Activated CD8-positive, alpha-beta T cell treated with anti-CD3 and anti-CD28 coated beads, Interleukin-2, amount 10 ng/mL, durations not matched to agents 7 days and 5 days (primary cell): ENCODE measurements at regions of chr6 and their contacts with region 1.

Region 1: GRCh38 chr6:3023663-3024483 is 24.2 kb downstream of the NQO2 start:
- DNase-seq: peak; percentile 92
- ATAC-seq: peak; percentile 86
- H3K4me3 Mint-ChIP-seq: peak overlapping the region; percentile 86
- H3K27ac Mint-ChIP-seq: peak overlapping the region; percentile 93
- H3K4me1 Mint-ChIP-seq: peaks cover 59% of the 10 kb centered on the region
- H3K27me3 Mint-ChIP-seq: peaks cover 1% of the 10 kb centered on the region

Region 2: DNA sequence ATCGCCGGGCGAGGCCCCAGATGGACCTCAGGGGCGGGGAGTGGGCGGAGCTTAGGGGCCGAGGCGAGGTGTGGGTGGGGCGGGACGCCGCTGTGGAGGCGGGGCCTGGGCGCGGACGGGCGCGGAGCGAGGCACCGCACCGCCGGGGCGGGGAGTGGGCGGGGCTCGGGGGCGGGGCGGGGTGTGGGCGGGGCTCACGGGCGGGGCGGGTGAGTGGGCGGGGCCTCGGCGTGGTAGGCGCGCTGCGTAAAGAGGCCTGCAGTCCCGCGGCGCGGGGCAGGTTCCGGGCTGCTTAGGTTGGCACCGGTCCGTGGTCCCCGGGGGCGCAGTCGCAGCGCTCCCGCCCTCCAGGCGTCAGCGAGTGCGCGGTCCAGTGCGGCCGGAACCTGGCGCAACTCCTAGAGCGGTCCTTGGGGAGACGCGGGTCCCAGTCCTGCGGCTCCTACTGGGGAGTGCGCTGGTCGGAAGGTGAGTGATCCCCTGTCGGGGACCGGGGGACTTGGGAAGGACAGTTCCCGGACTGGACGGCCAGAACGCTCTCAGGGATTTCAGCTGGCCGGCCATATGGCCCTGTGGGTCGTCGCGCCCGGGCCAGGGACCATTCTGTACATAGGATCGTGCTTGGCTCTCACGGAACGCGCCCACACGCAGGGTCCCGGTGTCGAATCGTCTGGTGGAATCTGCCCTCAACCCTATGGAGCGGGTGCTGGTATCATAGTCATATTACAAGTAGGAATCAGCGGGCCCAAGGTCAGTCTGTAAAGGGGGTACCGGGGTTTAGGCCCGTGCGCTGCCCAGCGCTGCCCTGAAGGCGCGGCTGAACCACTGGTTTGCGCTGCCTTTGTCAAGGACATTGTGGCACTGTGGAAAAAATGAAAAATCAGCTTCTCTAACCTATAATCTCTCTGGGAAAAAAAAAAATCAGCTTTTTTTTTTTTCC is 24.0 kb before region 1 on chr6 and contains the start of gene NQO2:
- CTCF ChIA-PET with region 1: interaction called, 13 read pairs
- POLR2A ChIA-PET with region 1: interaction called, 13 read pairs
- DNase-seq: peak; percentile 93
- ATAC-seq: peak; percentile 89
- H3K4me3 Mint-ChIP-seq: peak within 1 kb of the TSS; percentile 86
- H3K27ac Mint-ChIP-seq: peak within 1 kb of the TSS; percentile 83
- H3K4me1 Mint-ChIP-seq: peaks cover 35% of the 10 kb centered on the region
- H3K27me3 Mint-ChIP-seq: no peaks in the 10 kb centered on the region
- total RNA-seq, gene NQO2: 21.2 to 21.4 TPM

Region 3: DNA sequence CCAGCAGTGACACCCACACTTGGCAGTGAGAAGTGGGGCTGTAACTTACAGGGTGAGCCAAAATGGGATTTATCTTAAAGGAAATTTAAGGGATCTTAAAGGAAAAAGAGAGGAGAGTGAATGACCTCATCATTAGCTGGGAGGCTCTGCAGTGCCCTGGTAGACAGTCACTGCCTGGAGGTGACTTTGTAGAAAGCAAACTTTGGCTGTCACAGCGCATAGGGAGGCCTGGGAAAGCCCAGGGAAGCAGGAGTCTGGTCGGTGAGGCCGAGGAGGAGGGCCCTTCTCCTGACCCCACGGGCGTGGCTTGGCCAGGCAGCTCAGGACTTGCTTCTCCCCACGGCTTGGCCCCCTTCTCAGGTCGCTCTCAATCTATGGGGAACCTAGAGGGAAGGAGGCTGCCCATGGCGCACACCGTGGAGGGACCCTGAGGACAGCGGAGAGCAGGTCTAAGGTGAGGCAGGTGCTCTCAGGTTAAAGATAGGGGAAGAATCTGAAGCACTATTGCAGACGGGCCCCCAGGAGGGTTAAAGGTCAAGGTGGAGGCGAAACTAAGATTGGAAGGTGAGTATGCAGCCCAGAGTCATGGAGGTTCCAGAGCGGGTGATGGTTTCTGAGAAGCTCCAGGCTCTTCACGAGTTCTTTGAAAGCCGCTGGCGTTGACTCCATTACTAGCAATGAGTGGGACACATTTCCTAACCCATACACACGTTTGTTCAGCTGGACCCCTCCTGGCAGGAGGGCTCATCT is 28.8 kb after region 1 on chr6:
- CTCF ChIA-PET with region 1: interaction called, 6 read pairs
- POLR2A ChIA-PET with region 1: interaction called, 10 read pairs
- DNase-seq: no peak
- ATAC-seq: no peak
- H3K4me3 Mint-ChIP-seq: peak overlapping the region; percentile 75
- H3K27ac Mint-ChIP-seq: peak overlapping the region; percentile 72
- H3K4me1 Mint-ChIP-seq: peaks cover 31% of the 10 kb centered on the region
- H3K27me3 Mint-ChIP-seq: peaks cover 17% of the 10 kb centered on the region

Region 4: DNA sequence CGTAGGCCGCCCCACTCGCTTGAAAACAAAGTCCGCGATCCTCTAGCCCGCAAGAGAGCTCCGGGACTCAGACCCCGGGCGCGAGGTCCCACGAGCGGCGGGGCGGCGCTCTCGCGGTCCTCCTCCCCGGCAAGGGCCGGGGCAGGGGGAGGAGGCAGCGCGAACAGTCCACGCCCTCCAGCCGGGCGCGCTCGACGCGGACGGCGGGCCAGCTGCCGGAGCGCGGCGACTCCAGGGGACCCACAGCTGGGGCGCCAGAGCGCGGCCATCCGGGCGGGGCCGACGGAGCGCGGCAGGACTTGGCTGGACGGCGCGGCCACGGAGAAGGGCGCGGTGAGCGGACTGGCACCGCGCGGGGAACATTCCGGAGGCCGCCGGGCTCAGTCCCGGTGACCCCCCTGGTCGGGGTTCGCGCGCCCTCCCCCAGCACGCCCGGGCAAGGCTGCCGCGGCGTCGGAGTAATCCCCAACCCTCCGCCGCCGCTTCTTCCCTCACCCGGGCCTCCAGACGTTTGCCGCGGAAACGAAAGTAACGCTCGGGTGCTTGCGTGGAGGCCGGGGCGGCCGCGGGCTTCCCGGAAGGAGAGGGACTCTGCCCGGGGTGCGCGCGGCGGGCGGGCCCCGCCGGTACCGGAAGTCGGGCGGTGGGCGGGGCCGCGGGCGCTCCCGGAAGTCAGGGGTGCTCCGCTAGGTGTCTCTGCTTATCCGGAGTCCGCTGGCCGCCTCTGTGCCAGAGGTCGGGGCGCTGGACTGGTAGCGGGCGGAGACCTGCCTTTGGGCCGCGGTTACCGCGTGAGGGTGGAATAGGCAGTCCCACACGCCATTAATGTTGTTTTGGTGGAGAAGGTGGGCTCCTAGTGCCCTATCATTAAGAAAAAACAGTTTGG is 44.7 kb after region 1 on chr6 and contains the start of gene RIPK1:
- CTCF ChIA-PET with region 1: interaction called, 4 read pairs
- POLR2A ChIA-PET with region 1: interaction called, 10 read pairs
- DNase-seq: peak; percentile 95
- ATAC-seq: peak; percentile 82
- H3K4me3 Mint-ChIP-seq: peak within 1 kb of the TSS; percentile 96
- H3K27ac Mint-ChIP-seq: peak within 1 kb of the TSS; percentile 97
- H3K4me1 Mint-ChIP-seq: peaks cover 67% of the 10 kb centered on the region
- H3K27me3 Mint-ChIP-seq: no peaks in the 10 kb centered on the region
- total RNA-seq, gene RIPK1: 28.0 to 28.1 TPM